ENCODE measurements at regions of chr14 and their contacts with region 1.

Region 1: DNA sequence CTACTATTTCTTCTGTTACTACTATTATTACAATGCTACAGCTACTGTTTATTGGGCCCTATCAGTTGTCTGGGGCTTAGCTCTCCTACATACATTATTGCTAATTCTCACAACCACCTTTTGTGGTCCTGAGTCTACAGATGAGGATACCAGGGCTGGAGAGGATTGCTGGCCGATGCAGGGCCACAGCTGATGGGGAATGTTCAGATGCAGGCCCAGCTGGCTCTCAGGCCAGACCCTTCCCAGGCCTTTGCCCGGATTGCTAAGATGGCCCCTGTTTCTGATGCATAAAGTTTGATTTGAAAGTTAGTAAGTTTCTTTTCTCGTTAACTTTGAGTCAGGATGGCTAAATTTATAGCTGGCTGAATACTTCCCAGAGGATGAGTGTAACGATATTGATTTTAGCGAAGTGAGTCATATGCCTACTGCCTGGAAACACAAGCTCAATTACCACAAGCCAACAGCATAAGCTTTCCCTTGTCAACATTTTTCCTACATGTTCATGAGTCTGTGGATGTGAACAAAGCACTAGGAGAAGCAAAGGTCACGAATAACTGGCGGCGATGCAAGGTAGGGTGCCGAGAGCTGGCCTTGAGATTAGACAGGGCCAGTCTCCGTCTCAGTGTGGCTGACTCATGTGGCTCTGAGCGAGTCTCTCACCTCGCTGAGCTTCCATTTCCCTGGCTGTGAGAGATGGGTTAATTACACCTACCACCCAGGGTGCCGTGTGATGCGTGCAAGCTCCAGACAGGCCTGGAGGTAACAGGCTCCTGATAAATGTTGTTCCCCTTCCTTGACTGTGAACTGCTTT is 111.0 kb downstream of the BEGAIN start:
- DNase-seq: no peak
- H3K4me3 ChIP-seq: no peak overlapping the region
- H3K27ac ChIP-seq: no peak overlapping the region
- H3K4me1 ChIP-seq: no peaks in the 10 kb centered on the region; a peak in 2 of 7 replicates
- H3K27me3 ChIP-seq: no peaks in the 10 kb centered on the region
- CTCF ChIP-seq: no peak
- EP300 ChIP-seq: no peak
- POLR2A ChIP-seq: no peak
- RAD21 ChIP-seq: no peak

Region 2: GRCh38 chr14:99838639-99839303 is 637.4 kb before region 1 on chr14:
- CTCF ChIA-PET with region 1: no interaction called
- POLR2A ChIA-PET with region 1: no interaction called
- DNase-seq: peak in 1 of 2 experiments; percentile 67
- H3K4me3 ChIP-seq: peak overlapping the region in 1 of 4 experiments; percentile 34; a peak in 4 of 8 replicates
- H3K27ac ChIP-seq: no peak overlapping the region
- H3K4me1 ChIP-seq: peaks cover 2 to 15% (median 9%) of the 10 kb centered on the region in 4 experiments; a peak in 6 of 7 replicates
- H3K27me3 ChIP-seq: no peaks in the 10 kb centered on the region
- CTCF ChIP-seq: no peak
- EP300 ChIP-seq: peak in 1 of 2 experiments; percentile 59; a peak in 1 of 3 replicates
- POLR2A ChIP-seq: no peak
- RAD21 ChIP-seq: no peak

Region 3: DNA sequence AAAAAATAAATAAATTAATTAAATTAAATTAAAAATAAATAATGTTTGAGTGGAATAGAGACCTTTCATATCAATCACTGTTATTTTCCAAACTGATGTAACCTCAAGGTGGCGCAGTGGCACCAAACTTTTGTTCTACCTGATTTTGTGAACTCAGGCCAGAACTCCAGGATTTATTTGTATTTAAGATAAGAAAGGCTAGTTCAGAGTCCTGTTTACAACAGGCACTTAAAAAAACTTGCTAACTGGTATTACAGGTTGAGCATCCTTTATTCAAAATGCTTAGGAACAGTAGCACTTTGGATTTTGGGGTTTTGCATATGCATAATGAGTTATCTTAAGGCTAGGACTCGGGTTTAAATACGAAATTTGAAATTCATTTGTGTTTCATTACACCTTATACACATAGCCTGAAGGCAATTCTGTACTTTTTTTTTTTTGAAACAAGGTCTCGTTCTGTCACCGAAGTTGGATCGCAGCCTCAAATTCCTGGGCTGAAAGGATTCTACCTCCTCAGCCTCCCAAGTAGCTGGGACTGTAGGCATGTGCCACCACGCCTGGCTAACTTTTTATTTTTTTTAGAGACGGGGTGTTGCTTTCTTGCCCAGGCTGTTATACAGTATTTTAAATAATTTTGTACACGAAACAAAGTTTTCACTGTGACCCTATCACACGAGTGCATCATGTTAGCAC is 204.8 kb before region 1 on chr14:
- CTCF ChIA-PET with region 1: no interaction called
- POLR2A ChIA-PET with region 1: no interaction called
- DNase-seq: no peak
- H3K4me3 ChIP-seq: no peak overlapping the region
- H3K27ac ChIP-seq: no peak overlapping the region
- H3K4me1 ChIP-seq: peaks cover 0 to 15% (median 4%) of the 10 kb centered on the region in 4 experiments; a peak in 6 of 7 replicates
- H3K27me3 ChIP-seq: no peaks in the 10 kb centered on the region
- CTCF ChIP-seq: peak in 2 of 3 experiments; percentile 17 to 45; a peak in 2 of 4 replicates
- EP300 ChIP-seq: no peak
- POLR2A ChIP-seq: no peak
- RAD21 ChIP-seq: peak; percentile 24 to 39; a peak in 2 of 4 replicates

Region 4: DNA sequence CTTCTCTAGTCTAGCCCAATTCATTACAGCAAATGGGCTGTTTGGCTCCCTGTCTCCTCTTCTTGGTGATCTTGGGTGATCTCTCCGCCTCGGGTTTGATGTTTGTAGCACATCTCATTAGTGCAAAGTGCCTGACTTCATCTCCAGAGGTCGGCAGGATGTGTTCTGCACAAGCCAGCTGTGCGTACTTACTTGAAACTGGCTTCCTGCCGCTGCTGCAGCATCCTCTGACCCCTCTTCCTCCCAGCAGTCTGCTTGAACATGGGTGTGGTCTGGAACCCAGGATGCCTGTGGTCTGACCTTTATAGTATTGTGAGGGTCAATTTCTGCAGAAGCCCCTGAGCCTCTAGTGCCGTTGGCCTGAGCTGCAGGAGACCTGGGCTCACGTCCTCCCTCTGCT is 11.8 kb after region 1 on chr14:
- CTCF ChIA-PET with region 1: interaction called, 20 read pairs
- POLR2A ChIA-PET with region 1: no interaction called
- DNase-seq: no peak
- H3K4me3 ChIP-seq: no peak overlapping the region
- H3K27ac ChIP-seq: no peak overlapping the region
- H3K4me1 ChIP-seq: no peaks in the 10 kb centered on the region; a peak in 1 of 7 replicates
- H3K27me3 ChIP-seq: no peaks in the 10 kb centered on the region
- CTCF ChIP-seq: no peak
- EP300 ChIP-seq: no peak
- POLR2A ChIP-seq: no peak
- RAD21 ChIP-seq: no peak

Measured in H1 (cell line).